Sigmoid colon (tissue), 7 donors: ENCODE measurements at regions of chr7 and their contacts with region 1.

Region 1: GRCh38 chr7:136030862-136031318 is 53.7 kb upstream of the MTPN start:
- DNase-seq: no peak
- H3K4me3 ChIP-seq: no peak overlapping the region
- H3K27ac ChIP-seq: peak overlapping the region in 3 of 4 donors; percentile 78 to 86 (median 84)
- H3K4me1 ChIP-seq: peaks cover 2 to 56% (median 35%) of the 10 kb centered on the region in 4 donors
- H3K27me3 ChIP-seq: no peaks in the 10 kb centered on the region
- CTCF ChIP-seq: no peak
- EP300 ChIP-seq: no peak
- POLR2A ChIP-seq: no peak

Region 2: DNA sequence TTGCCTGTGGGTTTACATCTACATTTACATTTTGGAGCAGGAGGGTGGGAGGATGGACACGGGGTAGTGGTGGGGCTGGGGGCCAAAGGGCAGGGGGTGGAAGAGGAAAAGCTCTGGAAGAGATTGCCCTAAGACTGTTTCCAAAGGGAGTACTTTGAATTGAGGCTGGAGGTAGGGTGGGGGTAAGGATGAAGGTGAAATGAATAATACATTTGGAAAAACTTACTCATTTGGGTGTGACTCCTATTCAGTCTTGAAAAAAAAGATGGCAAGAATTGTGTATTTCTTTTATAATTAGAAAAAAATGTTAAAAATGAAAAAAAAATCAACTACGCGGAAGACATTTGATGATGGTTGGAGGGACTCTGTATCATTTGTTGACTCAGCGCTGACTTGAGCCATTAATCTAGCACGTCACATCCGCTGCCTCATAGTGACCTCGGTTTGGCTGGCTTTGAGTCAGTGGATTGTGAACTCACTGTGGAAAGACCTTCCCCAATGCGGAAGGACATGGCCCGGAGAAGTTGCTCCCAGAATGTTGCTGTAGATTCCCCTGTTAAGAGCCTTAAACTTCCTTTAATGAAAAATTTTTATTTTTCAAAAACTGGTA is 285.1 kb before region 1 on chr7:
- intact Hi-C with region 1: no loop called
- DNase-seq: peak; percentile 90
- H3K4me3 ChIP-seq: no peak overlapping the region
- H3K27ac ChIP-seq: peak overlapping the region; percentile 41 to 55 (median 51)
- H3K4me1 ChIP-seq: peaks cover 0 to 41% (median 37%) of the 10 kb centered on the region in 4 donors
- H3K27me3 ChIP-seq: no peaks in the 10 kb centered on the region
- CTCF ChIP-seq: no peak
- EP300 ChIP-seq: no peak
- POLR2A ChIP-seq: no peak

Region 3: GRCh38 chr7:136142583-136142982 is 111.7 kb after region 1 on chr7:
- intact Hi-C with region 1: loop called (anchors 2 kb)
- DNase-seq: no peak
- H3K4me3 ChIP-seq: no peak overlapping the region
- H3K27ac ChIP-seq: peak overlapping the region in 3 of 4 donors; percentile 14 to 64 (median 60)
- H3K4me1 ChIP-seq: peaks cover 2 to 66% (median 26%) of the 10 kb centered on the region in 4 donors
- H3K27me3 ChIP-seq: no peaks in the 10 kb centered on the region
- CTCF ChIP-seq: no peak
- EP300 ChIP-seq: peak in 3 of 4 donors; percentile 28 to 78 (median 67)
- POLR2A ChIP-seq: no peak

Region 4: DNA sequence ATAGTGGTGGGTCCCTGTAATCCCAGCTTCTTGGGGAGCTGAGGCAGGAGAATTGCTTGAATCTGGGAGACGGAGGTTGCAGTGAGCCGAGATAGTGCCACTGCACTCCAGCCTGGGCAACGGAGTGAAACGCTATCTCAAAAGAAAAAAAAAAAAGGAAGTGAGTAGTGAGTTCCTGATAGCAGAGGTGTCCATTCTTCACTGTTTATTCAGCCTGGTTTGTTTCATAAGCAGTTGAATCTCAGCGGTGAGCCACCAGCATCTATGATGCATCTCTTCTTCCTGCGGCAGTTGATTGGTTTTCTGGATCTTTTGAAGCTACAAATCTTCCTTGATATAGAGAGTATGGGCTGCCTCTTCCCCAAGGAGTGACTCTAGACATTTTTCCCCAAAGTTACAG is 262.4 kb after region 1 on chr7:
- intact Hi-C with region 1: loop called (anchors 5 kb)
- DNase-seq: no peak
- H3K4me3 ChIP-seq: no peak overlapping the region
- H3K27ac ChIP-seq: peak overlapping the region in 3 of 4 donors; percentile 51 to 68 (median 67)
- H3K4me1 ChIP-seq: peaks cover 0 to 31% (median 17%) of the 10 kb centered on the region in 4 donors
- H3K27me3 ChIP-seq: no peaks in the 10 kb centered on the region
- CTCF ChIP-seq: no peak
- EP300 ChIP-seq: no peak
- POLR2A ChIP-seq: no peak

Region 5: GRCh38 chr7:136874238-136875032 is 843.5 kb after region 1 on chr7:
- intact Hi-C with region 1: loop called (anchors 5 kb)
- DNase-seq: no peak
- H3K4me3 ChIP-seq: no peak overlapping the region
- H3K27ac ChIP-seq: peak overlapping the region in 3 of 4 donors; percentile 90 to 91 (median 91)
- H3K4me1 ChIP-seq: peaks cover 0 to 74% (median 42%) of the 10 kb centered on the region in 4 donors
- H3K27me3 ChIP-seq: no peaks in the 10 kb centered on the region
- CTCF ChIP-seq: peak in 1 of 4 experiments; percentile 33
- EP300 ChIP-seq: no peak
- POLR2A ChIP-seq: no peak

Region 6: DNA sequence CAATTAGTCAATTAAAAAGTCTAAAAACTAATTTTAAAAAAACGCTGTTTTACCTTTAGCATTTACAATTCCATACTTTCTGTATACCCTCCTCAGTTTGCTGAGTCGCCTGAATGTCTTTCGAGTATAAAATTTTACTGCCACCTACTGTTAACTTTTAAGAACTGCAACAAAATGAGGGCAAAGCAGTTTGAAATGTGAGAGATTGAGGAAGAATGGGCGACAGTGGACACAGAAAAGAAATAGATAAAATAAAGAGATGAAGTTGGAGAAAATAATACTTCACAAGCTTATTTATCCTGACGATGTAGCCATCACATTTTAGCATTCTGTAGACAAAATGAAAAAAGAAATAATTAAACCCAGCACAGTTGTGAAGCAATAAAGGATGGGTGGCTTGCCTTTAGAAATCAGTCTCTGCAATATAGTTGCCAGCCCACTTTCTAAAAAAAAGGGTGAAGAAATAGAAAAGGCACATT is 1423.4 kb after region 1 on chr7:
- intact Hi-C with region 1: loop called (anchors 10 kb)
- DNase-seq: no peak
- H3K4me3 ChIP-seq: peak overlapping the region in 2 of 4 donors; percentile 6 to 11
- H3K27ac ChIP-seq: peak overlapping the region; percentile 53 to 74 (median 70)
- H3K4me1 ChIP-seq: peaks cover 0 to 20% (median 6%) of the 10 kb centered on the region in 4 donors
- H3K27me3 ChIP-seq: no peaks in the 10 kb centered on the region
- CTCF ChIP-seq: peak; percentile 63 to 69 (median 66)
- EP300 ChIP-seq: no peak
- POLR2A ChIP-seq: no peak